ENCODE measurements at regions of chr12 and their contacts with region 1.

Region 1: GRCh38 chr12:10562306-10562933 is 51.0 kb downstream of the MAGOHB start:
- DNase-seq: peak; percentile 72
- H3K4me3 ChIP-seq: no peak overlapping the region
- H3K27ac ChIP-seq: no peak overlapping the region
- H3K4me1 ChIP-seq: no peaks in the 10 kb centered on the region
- H3K27me3 ChIP-seq: no peaks in the 10 kb centered on the region
- CTCF ChIP-seq: peak; percentile 34 to 41
- POLR2A ChIP-seq: no peak

Region 2: GRCh38 chr12:10235761-10236631 is 326.4 kb before region 1 on chr12:
- CTCF ChIA-PET with region 1: interaction called, 45 read pairs
- POLR2A ChIA-PET with region 1: no interaction called
- dilution Hi-C with region 1: no loop called
- intact Hi-C with region 1: loop called (anchors 1 kb)
- DNase-seq: peak; percentile 55
- H3K4me3 ChIP-seq: no peak overlapping the region
- H3K27ac ChIP-seq: no peak overlapping the region
- H3K4me1 ChIP-seq: no peaks in the 10 kb centered on the region
- H3K27me3 ChIP-seq: no peaks in the 10 kb centered on the region
- CTCF ChIP-seq: peak; percentile 72 to 73
- POLR2A ChIP-seq: no peak

Region 3: GRCh38 chr12:10600988-10601387 is 38.6 kb after region 1 on chr12:
- CTCF ChIA-PET with region 1: no interaction called
- POLR2A ChIA-PET with region 1: no interaction called
- dilution Hi-C with region 1: no loop called
- intact Hi-C with region 1: no loop called
- DNase-seq: no peak
- H3K4me3 ChIP-seq: no peak overlapping the region
- H3K27ac ChIP-seq: no peak overlapping the region
- H3K4me1 ChIP-seq: no peaks in the 10 kb centered on the region
- H3K27me3 ChIP-seq: no peaks in the 10 kb centered on the region
- CTCF ChIP-seq: no peak
- POLR2A ChIP-seq: no peak